AG04450 (cell line): ENCODE measurements at regions of chr4 and their contacts with region 1.

Region 1: DNA sequence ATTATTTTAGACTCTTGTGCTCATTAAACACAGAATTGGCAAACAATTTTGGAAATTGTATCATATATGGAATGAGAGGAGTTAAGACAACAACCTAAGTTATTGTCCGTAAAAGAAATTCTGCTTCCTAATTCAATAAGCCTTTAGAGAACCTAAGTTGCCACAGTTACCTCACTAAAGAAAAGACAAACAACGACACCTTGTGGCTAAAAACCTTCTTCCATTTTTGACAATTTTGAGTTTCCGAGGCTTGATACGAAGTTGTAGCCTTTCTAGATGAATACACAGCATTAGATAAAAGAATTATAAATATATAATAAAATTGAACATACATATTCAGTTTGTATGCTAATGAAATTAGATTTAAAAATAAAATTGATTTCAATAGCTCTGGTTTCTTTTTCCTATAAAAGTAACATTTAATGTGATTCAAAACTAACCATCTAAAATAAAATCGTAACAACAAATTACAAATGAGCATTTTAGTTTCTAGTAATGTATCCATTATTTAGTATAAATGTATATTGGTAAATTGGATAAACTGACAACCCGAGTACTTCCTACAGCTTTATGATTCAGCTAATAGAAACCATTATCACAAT is 275.1 kb downstream of the GPM6A start:
- DNase-seq: peak; percentile 8
- H3K4me3 ChIP-seq: no peak overlapping the region
- H3K27ac ChIP-seq: no peak overlapping the region
- H3K27me3 ChIP-seq: no peaks in the 10 kb centered on the region
- CTCF ChIP-seq: peak; percentile 49

Region 2: GRCh38 chr4:174764105-174764729 is 772.7 kb before region 1 on chr4:
- CTCF ChIA-PET with region 1: interaction called, 57 read pairs
- POLR2A ChIA-PET with region 1: no interaction called
- DNase-seq: peak; percentile 11
- H3K4me3 ChIP-seq: no peak overlapping the region
- H3K27ac ChIP-seq: no peak overlapping the region
- H3K27me3 ChIP-seq: no peaks in the 10 kb centered on the region
- CTCF ChIP-seq: peak; percentile 65

Region 3: GRCh38 chr4:175346381-175346780 is 190.6 kb before region 1 on chr4:
- CTCF ChIA-PET with region 1: no interaction called
- POLR2A ChIA-PET with region 1: no interaction called
- DNase-seq: no peak
- H3K4me3 ChIP-seq: no peak overlapping the region
- H3K27ac ChIP-seq: no peak overlapping the region
- H3K27me3 ChIP-seq: no peaks in the 10 kb centered on the region
- CTCF ChIP-seq: no peak